Activated CD4-positive, alpha-beta T cell treated with anti-CD3 and anti-CD28 coated beads, Interleukin-2, amount 10 ng/mL, durations not matched to agents 24 days and 14 days (primary cell): ENCODE measurements at regions of chr1 and their contacts with region 1.

Region 1: GRCh38 chr1:59296358-59297256 is at the start of gene FGGY:
- DNase-seq: peak; percentile 96
- H3K4me3 Mint-ChIP-seq: peak within 1 kb of the TSS; percentile 85
- H3K27ac Mint-ChIP-seq: peak within 1 kb of the TSS; percentile 91
- H3K4me1 Mint-ChIP-seq: peaks cover 36% of the 10 kb centered on the region
- H3K27me3 Mint-ChIP-seq: no peaks in the 10 kb centered on the region
- total RNA-seq, gene FGGY: 6.2 and 8.1 TPM in 2 replicates

Region 2: DNA sequence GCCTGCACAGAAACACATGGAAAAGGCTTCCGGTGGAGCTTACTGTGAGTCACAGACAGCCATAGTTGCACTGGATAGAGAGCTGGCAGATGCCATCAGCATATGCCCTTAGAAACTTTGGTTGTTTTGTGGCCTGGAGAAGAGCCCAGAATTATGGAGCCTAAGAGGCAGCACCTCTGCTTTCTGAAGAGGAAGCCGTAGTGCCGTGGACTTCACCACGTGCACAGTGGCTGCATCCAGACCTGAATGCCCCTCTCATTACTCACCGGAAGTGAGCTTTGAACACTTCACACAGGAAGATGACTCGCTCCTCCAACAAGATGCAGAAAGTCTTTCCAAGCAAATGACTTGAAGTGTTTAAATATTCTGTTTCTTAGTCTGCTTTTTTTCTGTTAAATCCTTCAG is 541.1 kb before region 1 on chr1:
- intact Hi-C with region 1: loop called (anchors 10 kb)
- DNase-seq: peak; percentile 84
- H3K4me3 Mint-ChIP-seq: peak overlapping the region; percentile 61
- H3K27ac Mint-ChIP-seq: peak overlapping the region; percentile 91
- H3K4me1 Mint-ChIP-seq: peaks cover 46% of the 10 kb centered on the region
- H3K27me3 Mint-ChIP-seq: no peaks in the 10 kb centered on the region

Region 3: GRCh38 chr1:59150577-59151391 is 145.8 kb before region 1 on chr1:
- intact Hi-C with region 1: loop called (anchors 5 kb)
- DNase-seq: peak; percentile 81
- H3K4me3 Mint-ChIP-seq: peak overlapping the region; percentile 35
- H3K27ac Mint-ChIP-seq: peak overlapping the region; percentile 51
- H3K4me1 Mint-ChIP-seq: peaks cover 33% of the 10 kb centered on the region
- H3K27me3 Mint-ChIP-seq: no peaks in the 10 kb centered on the region